GM12878 (cell line): ENCODE measurements at regions of chr19 and their contacts with region 1.

Region 1: DNA sequence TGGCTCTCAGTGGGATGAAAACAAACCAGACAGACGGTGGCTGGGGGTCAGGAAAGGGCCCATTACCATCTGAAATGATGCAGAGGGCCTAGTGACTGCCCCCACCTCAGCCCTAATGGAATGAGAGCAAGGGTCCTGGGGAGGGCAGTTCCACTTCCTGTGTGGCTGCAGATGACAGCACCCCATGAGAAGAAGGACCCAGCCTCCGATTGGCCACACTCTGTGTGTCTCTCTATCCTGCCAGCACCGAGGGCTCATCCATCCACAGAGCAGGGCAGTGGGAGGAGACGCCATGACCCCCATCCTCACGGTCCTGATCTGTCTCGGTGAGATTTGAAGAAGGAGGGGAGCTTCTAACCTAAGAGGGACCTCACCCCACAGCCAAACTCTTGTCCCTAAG is 498 bp downstream of the LILRB1 start:
- DNase-seq: no peak
- ATAC-seq: no peak; the same call in 2 of the 3 replicates
- H3K4me3 ChIP-seq: no peak overlapping the region
- H3K27ac ChIP-seq: peak overlapping the region; percentile 15; the same call in 1 of the 2 replicates
- H3K4me1 ChIP-seq: peaks cover 27% of the 10 kb centered on the region
- H3K27me3 ChIP-seq: no peaks in the 10 kb centered on the region
- CTCF ChIP-seq: no peak
- EP300 ChIP-seq: no peak
- POLR2A ChIP-seq: no peak; the same call in 1 of the 2 replicates
- RAD21 ChIP-seq: no peak

Region 2: DNA sequence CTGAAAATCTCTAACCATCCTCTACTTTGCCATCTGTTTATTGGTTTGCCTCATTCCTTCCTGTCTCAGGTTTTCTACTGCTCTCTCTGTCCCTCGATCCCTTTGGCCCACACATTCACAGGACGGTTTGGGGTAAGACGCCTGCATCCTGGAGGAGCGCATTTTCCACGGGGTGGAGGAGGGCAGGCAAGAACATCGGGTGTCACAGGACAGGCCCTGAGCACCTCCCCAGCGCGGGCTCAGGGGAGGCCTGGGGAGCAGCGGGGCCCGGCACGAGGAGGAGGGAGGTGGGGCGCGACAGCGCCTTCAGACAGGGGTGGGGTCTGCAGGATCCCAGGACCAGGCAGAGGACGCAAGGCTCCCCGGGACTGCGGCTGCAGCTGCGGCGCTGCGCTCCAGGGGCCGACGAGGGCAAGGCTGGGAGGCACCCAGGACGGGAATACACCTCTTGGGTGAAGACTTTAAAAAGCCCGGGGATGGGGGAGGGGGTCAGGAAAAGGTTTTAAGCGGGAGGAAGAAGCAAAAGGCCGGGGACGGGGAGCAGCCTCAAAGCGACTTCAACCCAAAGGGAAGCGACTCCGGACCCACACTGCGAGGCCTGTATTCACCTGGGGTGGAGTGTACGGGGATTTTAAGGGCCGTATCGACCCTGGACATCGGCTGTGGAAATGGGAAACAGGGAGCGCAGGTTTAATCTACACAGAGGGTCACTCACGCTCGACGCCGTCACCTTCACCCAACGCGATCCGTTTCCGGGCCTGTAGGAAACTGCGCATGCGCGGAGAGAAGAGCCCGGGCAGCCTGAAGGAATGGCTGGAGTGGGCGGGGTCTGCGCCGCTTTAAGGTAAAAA is 1498.4 kb before region 1 on chr19 and contains the start of gene ZNF415:
- CTCF ChIA-PET with region 1: no interaction called
- POLR2A ChIA-PET with region 1: no interaction called
- RAD21 ChIA-PET with region 1: no interaction called
- SMC1A ChIA-PET with region 1: no interaction called
- in situ Hi-C with region 1: no loop called
- intact Hi-C with region 1: no loop called
- DNase-seq: no peak
- ATAC-seq: no peak
- H3K4me3 ChIP-seq: no peak within 1 kb of the TSS
- H3K27ac ChIP-seq: no peak within 1 kb of the TSS
- H3K4me1 ChIP-seq: no peaks in the 10 kb centered on the region
- H3K27me3 ChIP-seq: no peaks in the 10 kb centered on the region
- CTCF ChIP-seq: no peak
- EP300 ChIP-seq: no peak
- POLR2A ChIP-seq: no peak
- RAD21 ChIP-seq: no peak
- polyA plus RNA-seq, gene ZNF415: not detected

Region 3: GRCh38 chr19:54281007-54281728 is 349.6 kb before region 1 on chr19 and contains the start of gene LILRB2:
- CTCF ChIA-PET with region 1: no interaction called
- POLR2A ChIA-PET with region 1: no interaction called
- RAD21 ChIA-PET with region 1: no interaction called
- SMC1A ChIA-PET with region 1: no interaction called
- in situ Hi-C with region 1: loop called (anchors 5 kb)
- intact Hi-C with region 1: no loop called
- DNase-seq: no peak
- ATAC-seq: no peak
- H3K4me3 ChIP-seq: no peak within 1 kb of the TSS
- H3K27ac ChIP-seq: no peak within 1 kb of the TSS
- H3K4me1 ChIP-seq: no peaks in the 10 kb centered on the region
- H3K27me3 ChIP-seq: peaks cover 0 to 1% of the 10 kb centered on the region in 2 experiments; a peak in 2 of 4 replicates
- CTCF ChIP-seq: no peak
- EP300 ChIP-seq: no peak
- POLR2A ChIP-seq: no peak
- RAD21 ChIP-seq: no peak
- polyA plus RNA-seq, gene LILRB2: not detected

Region 4: GRCh38 chr19:54551293-54551692 is 79.5 kb before region 1 on chr19:
- CTCF ChIA-PET with region 1: no interaction called
- POLR2A ChIA-PET with region 1: no interaction called
- RAD21 ChIA-PET with region 1: no interaction called
- SMC1A ChIA-PET with region 1: no interaction called
- in situ Hi-C with region 1: no loop called
- intact Hi-C with region 1: no loop called
- DNase-seq: peak; percentile 67
- ATAC-seq: peak; percentile 76
- H3K4me3 ChIP-seq: peak overlapping the region; percentile 48; the same call in 1 of the 2 replicates
- H3K27ac ChIP-seq: peak overlapping the region; percentile 33
- H3K4me1 ChIP-seq: peaks cover 24% of the 10 kb centered on the region
- H3K27me3 ChIP-seq: no peaks in the 10 kb centered on the region
- CTCF ChIP-seq: no peak
- EP300 ChIP-seq: peak; percentile 68 to 82; a peak in 3 of 4 replicates
- POLR2A ChIP-seq: no peak
- RAD21 ChIP-seq: no peak

Region 5: DNA sequence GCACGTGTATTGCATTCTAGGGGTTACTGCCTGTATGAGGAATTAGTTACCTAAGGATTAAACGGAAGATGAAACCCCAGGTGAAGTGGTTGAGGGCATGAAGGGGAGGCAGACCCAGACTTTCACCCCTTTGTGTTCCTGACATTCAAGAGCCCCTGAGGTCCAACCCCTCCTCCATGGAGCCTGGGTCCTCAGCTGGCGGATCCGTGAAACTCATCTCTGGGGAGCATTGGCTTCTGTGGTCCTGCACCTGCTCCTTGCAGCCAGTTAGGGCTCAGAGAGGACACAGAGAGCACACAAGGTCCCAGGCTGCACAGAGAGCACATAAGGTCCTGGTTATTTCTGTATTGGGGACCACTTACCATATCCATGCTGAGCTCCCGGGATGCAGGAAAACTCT is 44.4 kb before region 1 on chr19:
- CTCF ChIA-PET with region 1: no interaction called
- POLR2A ChIA-PET with region 1: no interaction called
- RAD21 ChIA-PET with region 1: no interaction called
- SMC1A ChIA-PET with region 1: no interaction called
- in situ Hi-C with region 1: no loop called
- intact Hi-C with region 1: no loop called
- DNase-seq: no peak
- ATAC-seq: no peak
- H3K4me3 ChIP-seq: no peak overlapping the region
- H3K27ac ChIP-seq: no peak overlapping the region
- H3K4me1 ChIP-seq: no peaks in the 10 kb centered on the region
- H3K27me3 ChIP-seq: peaks cover 2 to 5% of the 10 kb centered on the region in 2 experiments; a peak in 3 of 4 replicates
- CTCF ChIP-seq: no peak
- EP300 ChIP-seq: no peak
- POLR2A ChIP-seq: no peak
- RAD21 ChIP-seq: no peak